Activated CD4-positive, alpha-beta T cell treated with anti-CD3 and anti-CD28 coated beads, Interleukin-2, amount 10 ng/mL, durations not matched to agents 24 days and 14 days (primary cell): ENCODE measurements at regions of chr11 and their contacts with region 1.

Region 1: GRCh38 chr11:14519917-14520746 is at the start of gene PSMA1:
- DNase-seq: peak; percentile 98
- H3K4me3 Mint-ChIP-seq: peak within 1 kb of the TSS; percentile 96
- H3K27ac Mint-ChIP-seq: peak within 1 kb of the TSS; percentile 98
- H3K4me1 Mint-ChIP-seq: peaks cover 22% of the 10 kb centered on the region
- H3K27me3 Mint-ChIP-seq: no peaks in the 10 kb centered on the region
- total RNA-seq, gene PSMA1: 334 and 344 TPM in 2 replicates

Region 2: DNA sequence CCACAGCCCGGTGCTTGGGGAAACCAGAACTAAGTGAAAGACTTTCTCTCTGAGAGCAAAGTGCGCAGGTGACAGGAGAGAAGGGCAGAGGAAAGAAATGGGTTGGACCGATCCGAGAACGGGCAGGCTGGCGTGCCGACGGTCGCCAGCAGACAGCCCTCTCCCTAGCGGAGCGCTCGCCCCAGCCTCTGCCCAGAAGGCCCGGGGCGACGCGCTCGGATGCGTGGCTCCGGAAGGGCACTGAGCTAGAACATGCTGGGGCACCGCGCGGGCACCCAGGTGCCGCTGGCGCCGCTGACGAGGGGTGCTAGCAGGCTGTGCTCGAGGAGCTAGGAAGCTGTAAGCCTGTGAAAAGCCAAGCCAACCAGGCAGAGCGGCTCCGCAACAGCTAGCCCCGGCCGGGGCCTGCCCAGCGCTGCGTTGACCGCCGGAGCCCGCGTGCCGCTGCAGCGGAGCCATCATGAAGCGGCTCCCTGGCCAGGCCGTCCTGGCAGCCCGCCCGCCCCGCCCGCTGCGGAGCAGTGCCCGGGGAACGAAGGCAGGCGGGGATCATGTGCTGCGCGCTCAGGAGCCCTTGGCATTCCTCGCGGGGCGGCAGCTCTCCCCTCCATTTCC is 139.1 kb before region 1 on chr11:
- intact Hi-C with region 1: no loop called
- DNase-seq: peak; percentile 80
- H3K4me3 Mint-ChIP-seq: peak overlapping the region; percentile 81
- H3K27ac Mint-ChIP-seq: peak overlapping the region; percentile 51
- H3K4me1 Mint-ChIP-seq: peaks cover 22% of the 10 kb centered on the region
- H3K27me3 Mint-ChIP-seq: peaks cover 32% of the 10 kb centered on the region

Region 3: GRCh38 chr11:14499554-14500180 is 20.5 kb before region 1 on chr11 and contains the start of gene COPB1:
- intact Hi-C with region 1: loop called (anchors 1 kb)
- DNase-seq: peak; percentile 98
- H3K4me3 Mint-ChIP-seq: peak within 1 kb of the TSS; percentile 99
- H3K27ac Mint-ChIP-seq: peak within 1 kb of the TSS; percentile 96
- H3K4me1 Mint-ChIP-seq: peaks cover 34% of the 10 kb centered on the region
- H3K27me3 Mint-ChIP-seq: no peaks in the 10 kb centered on the region
- total RNA-seq, gene COPB1: 91.8 and 93.5 TPM in 2 replicates

Region 4: DNA sequence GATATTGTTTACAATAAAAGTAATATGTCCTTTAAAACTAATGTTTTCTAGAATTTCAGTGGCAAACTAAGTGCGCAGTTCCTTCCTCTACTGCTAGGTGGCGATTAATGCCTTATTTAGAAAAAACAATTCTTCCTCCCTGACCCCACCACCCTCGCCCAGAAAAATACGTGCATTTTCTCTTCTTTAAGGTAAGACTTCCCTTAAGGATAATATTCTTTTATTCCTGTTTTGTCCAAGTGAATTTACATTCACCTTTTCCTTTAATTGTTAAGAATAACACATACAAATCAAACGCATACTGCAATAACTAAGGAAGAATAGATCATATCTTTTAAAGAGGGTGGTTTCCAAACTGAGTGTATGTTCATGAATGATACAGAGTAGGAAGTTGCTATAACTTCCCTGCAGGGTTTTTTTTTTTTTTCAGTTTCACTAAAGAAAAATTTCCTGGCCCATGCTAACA is 17.0 kb after region 1 on chr11:
- intact Hi-C with region 1: loop called (anchors 1 kb)
- DNase-seq: peak; percentile 82
- H3K4me3 Mint-ChIP-seq: peak overlapping the region; percentile 70
- H3K27ac Mint-ChIP-seq: peak overlapping the region; percentile 87
- H3K4me1 Mint-ChIP-seq: peaks cover 32% of the 10 kb centered on the region
- H3K27me3 Mint-ChIP-seq: no peaks in the 10 kb centered on the region

Region 5: DNA sequence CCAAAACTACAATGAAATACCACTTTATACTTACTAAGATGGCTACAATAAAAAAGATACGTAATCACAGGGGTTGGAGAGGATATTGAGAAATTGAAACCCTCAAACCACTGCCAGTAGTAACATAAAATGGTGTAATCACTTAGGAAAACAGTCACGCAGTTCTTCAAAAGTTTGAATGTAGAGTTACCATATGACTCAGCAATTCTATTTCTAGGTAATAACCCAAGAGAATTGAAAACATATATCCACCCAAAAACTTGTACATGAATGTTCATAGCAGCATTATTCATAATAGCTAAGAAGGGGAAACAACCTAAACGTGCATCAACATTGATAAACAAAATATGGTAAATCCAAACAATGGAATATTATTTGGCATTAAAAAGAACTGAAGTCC is 24.5 kb after region 1 on chr11:
- intact Hi-C with region 1: loop called (anchors 1 kb)
- DNase-seq: peak; percentile 65
- H3K4me3 Mint-ChIP-seq: peak overlapping the region; percentile 61
- H3K27ac Mint-ChIP-seq: peak overlapping the region; percentile 94
- H3K4me1 Mint-ChIP-seq: peaks cover 49% of the 10 kb centered on the region
- H3K27me3 Mint-ChIP-seq: no peaks in the 10 kb centered on the region

Region 6: DNA sequence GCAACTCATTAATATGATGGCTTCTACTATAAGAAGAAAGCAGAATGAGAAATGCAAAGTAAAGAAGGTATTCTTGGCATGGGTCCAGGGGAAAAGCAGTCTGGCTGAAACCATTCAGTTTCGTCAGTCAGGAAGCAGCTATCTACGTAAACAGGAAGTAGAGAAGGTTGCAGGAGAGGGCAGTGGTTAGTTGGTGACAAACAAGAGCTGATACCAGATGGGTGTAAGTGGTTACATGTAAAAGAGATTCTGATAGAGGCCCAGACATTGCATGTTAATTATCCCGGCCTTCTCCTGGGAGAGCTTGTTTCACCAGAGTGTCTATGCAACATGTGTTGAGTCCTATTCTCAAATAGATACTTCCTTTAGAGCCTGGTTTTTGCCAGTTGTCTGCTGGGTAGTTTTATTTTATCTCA is 58.4 kb after region 1 on chr11:
- intact Hi-C with region 1: loop called (anchors 1 kb)
- DNase-seq: peak; percentile 92
- H3K4me3 Mint-ChIP-seq: peak overlapping the region; percentile 74
- H3K27ac Mint-ChIP-seq: peak overlapping the region; percentile 90
- H3K4me1 Mint-ChIP-seq: peaks cover 51% of the 10 kb centered on the region
- H3K27me3 Mint-ChIP-seq: no peaks in the 10 kb centered on the region

Region 7: DNA sequence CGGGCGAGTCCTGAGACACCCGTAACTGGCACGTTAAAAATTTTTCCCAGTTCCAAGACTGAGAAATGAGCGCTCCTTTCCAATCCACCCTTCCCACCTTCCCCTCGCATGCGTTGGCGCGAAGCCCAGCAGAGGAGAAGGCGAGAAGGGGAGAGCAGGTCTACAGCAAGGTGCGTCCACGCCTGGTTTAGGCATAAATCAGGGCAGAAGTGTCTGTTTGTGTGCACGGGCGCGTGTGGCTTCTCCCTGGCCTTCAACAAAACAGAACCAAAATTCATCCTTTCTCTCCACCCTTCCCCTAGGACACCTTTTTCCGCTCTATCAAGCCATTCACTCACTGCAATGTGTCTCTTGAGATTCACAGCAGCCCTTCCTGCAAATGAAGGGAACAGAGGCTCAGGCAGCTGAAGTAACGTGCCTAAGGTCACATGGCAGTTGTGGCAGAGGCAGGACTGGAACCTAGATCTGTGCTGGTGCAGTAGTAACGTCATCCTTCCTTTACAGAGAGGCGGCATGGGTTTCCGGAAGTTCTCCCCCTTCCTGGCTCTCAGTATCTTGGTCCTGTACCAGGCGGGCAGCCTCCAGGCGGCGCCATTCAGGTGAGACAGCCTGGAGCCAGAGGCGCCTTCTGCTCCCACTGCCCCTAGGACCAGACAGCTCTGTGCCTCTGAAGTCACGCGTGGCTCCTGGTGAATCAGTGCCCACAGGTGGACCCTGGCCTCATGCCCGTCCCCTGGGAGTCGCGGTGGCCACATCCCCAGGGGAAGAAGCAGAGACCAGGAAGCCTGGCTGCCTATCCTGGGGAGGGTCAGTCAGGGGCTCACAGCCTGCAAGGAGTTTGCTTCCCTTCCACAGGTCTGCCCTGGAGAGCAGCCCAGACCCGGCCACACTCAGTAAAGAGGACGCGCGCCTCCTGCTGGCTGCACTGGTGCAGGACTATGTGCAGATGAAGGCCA is 554.4 kb after region 1 on chr11:
- intact Hi-C with region 1: loop called (anchors 10 kb)
- DNase-seq: peak; percentile 95
- H3K4me3 Mint-ChIP-seq: peak overlapping the region; percentile 84
- H3K27ac Mint-ChIP-seq: peak overlapping the region; percentile 59
- H3K4me1 Mint-ChIP-seq: peaks cover 16% of the 10 kb centered on the region
- H3K27me3 Mint-ChIP-seq: peaks cover 37% of the 10 kb centered on the region